WTC11 (cell line): ENCODE measurements at regions of chr17 and their contacts with region 1.

Region 1: DNA sequence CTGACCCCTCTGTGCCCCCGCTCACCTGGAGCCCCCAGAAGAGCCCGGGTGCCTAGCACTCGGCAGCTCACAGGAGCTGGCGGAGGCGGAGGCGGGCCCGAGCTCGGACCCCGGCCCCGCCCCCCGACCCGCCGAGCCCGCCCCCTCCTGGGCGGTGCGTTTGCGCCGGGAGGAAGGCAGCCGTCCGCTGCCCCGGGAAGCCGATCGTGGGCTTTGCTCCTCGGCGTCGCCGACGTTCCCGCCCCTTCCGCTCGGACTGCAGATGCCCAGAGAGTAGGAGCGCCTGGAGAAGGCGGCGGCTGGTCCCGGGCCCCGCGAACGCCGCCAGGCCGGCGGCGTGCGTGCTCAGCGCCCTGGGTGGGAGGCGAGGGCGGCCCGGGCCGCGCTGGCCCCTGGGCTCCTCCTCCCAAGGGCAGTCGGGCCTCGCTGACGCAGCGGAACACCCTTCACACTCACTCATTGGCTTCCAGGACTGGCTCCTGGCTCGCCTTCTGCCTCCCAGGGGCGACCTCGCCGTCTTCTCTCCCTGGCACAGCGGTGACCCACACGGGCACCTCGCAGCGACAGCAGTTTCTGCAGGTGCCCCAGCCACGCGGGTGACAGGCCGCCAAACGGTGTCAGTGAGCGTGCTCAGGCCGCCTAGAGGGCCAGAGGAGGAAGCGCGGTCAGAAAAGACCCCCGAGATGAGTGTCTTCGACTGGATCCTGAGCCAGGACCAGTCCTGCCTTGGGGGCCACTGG is at the start of gene PLSCR3:
- DNase-seq: peak; percentile 87
- ATAC-seq: peak; percentile 78
- H3K4me3 Mint-ChIP-seq: peak within 1 kb of the TSS; percentile 90
- H3K27ac Mint-ChIP-seq: peak within 1 kb of the TSS; percentile 85
- H3K4me1 Mint-ChIP-seq: peaks cover 11% of the 10 kb centered on the region
- H3K27me3 Mint-ChIP-seq: no peaks in the 10 kb centered on the region; the same call in 1 of the 2 replicates
- CTCF ChIP-seq: no peak
- total RNA-seq, gene PLSCR3: 34.1 to 42.7 TPM (median 37.6 TPM) in 3 replicates

Region 2: DNA sequence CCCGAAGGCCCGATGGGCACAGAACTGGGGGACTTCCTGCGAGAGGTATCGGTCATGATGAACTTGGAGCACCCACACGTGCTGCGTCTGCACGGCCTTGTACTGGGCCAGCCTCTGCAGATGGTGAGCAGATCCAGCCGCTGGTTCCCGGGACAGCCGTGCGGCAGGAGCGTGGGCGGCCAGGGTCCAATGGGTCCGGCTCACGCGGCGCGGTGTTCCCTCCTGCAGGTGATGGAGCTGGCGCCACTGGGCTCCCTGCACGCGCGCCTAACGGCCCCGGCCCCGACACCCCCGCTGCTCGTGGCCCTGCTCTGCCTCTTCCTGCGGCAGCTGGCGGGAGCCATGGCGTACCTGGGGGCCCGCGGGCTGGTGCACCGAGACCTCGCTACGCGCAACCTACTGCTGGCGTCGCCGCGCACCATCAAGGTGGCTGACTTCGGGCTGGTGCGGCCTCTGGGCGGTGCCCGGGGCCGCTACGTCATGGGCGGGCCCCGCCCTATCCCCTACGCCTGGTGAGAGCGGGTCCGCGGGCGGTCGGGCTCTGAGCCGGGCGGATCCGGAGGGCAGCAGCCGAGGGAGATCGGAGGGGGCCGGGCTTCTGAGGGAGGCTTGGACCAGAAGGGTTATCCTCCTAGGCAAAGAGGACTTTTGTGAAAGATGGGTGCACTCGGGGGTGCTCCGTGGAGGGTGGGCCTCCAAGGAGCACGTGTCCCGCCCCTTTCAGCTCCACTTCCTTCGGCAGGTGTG is 10.7 kb before region 1 on chr17:
- CTCF ChIA-PET with region 1: interaction called, 20 read pairs
- POLR2A ChIA-PET with region 1: interaction called, 7 read pairs
- DNase-seq: peak; percentile 87
- ATAC-seq: peak; percentile 85
- H3K4me3 Mint-ChIP-seq: peak overlapping the region; percentile 58
- H3K27ac Mint-ChIP-seq: no peak overlapping the region
- H3K4me1 Mint-ChIP-seq: peaks cover 26% of the 10 kb centered on the region
- H3K27me3 Mint-ChIP-seq: peaks cover 45% of the 10 kb centered on the region
- CTCF ChIP-seq: no peak

Region 3: DNA sequence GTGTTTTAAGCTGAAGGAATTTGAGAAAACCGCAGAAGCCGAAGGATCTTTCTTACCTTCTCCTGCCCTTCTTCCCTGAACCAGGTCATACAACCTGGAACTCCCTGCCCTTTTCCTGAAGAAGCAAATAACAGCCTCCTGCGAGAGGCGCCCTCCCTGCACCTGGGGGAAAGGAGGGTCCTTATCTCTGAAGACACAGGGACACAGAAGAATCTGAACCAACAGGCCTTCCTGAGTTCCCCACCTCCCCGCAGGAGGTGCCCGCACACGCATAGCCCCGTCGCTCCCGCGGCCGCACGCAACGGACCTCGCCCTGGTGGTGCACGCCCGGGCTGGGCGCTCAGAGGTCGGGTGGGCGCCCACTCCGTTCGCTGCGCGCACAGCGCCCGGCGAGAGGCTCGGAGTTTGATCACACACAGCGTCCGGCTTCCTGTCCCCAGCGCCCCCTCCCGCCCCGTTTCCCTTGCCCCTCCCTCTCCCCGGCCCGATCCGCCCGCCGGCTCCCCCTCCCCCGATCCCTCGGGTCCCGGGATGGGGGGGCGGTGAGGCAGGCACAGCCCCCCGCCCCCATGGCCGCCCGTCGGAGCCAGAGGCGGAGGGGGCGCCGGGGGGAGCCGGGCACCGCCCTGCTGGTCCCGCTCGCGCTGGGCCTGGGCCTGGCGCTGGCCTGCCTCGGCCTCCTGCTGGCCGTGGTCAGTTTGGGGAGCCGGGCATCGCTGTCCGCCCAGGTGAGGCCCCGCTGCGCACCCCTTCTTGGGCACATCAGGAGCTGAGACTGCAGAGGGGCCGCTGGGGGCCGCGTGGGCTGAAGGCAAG is 154.2 kb after region 1 on chr17 and contains the start of gene TNFSF12:
- CTCF ChIA-PET with region 1: no interaction called
- POLR2A ChIA-PET with region 1: no interaction called
- DNase-seq: peak; percentile 67
- ATAC-seq: peak; percentile 74
- H3K4me3 Mint-ChIP-seq: peak within 1 kb of the TSS; percentile 77
- H3K27ac Mint-ChIP-seq: peak within 1 kb of the TSS; percentile 37; the same call in 1 of the 2 replicates
- H3K4me1 Mint-ChIP-seq: peaks cover 6% of the 10 kb centered on the region
- H3K27me3 Mint-ChIP-seq: peaks cover 12% of the 10 kb centered on the region
- CTCF ChIP-seq: no peak
- total RNA-seq, gene TNFSF12: 8.1 to 10.5 TPM (median 10.2 TPM) in 3 replicates